GM13976 (cell line): ENCODE measurements at regions of chr13 and their contacts with region 1.

Region 1: DNA sequence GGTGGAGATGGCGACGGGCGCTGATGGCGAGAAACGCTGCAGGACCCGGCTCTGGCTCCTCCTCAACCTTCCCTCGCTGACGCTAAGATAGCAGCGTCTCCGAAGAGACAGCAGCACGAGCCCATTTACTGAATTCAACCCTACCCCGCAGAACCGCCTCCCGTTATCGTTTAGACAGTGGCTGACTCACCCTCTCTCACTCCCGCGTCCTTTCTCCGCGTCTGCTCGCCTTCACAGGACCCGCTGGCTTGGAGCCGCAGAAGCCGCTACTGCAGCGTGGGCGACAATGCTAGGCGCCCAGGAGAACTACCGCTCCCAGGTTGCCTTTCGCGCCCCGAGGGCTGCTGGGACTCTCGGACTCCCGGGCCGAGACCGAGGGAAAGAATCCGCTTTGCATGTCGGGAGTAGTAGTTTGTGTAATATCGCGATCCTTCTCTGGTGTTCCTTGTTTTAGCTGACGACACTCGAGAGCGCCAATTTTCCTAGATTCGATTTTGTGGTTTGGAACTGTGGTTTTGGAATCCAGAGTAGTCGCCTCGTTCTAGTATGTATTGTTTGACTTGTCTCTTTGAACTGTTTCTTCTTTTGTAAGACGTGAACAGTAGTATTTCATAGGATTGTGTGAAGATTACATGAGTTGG is at the start of gene KBTBD6:
- DNase-seq: peak; percentile 91
- CTCF ChIP-seq: no peak

Region 2: GRCh38 chr13:41034881-41035280 is 97.8 kb before region 1 on chr13:
- in situ Hi-C with region 1: no loop called
- DNase-seq: no peak
- CTCF ChIP-seq: no peak

Region 3: GRCh38 chr13:41193919-41194824 is 61.5 kb after region 1 on chr13 and contains the start of gene KBTBD7:
- in situ Hi-C with region 1: loop called (anchors 10 kb)
- DNase-seq: peak; percentile 91
- CTCF ChIP-seq: no peak